Sigmoid colon (tissue), 7 donors: ENCODE measurements at regions of chr19 and their contacts with region 1.

Region 1: DNA sequence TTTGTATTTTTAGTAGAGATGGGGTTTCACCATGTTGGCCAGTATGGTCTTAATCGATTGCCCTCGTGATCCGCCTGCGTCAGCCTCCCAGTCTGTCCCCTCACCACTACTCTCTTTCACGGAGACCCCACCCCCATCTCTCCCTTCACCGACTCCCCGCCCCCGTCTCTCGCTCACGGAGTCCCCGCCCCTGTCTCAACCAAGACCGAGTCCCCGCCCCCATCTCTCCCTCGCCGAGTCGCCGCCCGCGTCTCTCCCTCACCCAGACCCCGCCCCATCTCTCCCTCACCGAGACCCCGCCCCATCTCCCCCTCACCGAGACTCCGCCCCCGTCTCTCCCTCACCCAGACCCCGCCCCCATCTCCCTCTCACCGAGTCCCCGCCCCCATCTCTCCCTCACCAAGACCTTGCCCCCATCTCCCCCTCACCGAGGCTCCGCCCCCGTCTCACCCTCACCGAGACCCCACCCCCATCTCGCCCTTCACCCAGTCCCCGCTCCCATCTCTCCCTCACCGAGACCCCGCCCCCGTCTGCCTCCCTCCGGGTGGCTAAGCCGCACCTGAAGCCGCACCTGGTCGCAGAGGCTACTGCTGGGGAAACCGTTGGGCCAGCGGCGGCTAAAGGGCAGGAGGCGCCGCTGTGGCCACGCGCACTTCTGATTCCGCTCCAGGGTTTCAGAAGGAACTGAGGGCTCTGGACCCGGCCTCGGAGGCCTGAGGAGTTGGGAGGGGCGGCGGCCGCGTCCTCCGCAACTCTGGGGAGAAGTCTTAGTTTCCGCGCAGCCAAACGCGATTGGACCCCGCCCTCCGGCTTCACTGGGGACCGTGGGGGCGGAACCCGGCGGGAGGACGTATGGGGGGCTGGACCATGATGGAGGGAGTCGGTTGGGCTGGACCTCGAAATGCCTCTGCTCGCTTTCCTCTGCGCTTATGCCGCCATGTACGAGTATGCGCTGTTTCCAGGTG is 17.1 kb upstream of the ZNF846 start:
- DNase-seq: peak; percentile 99
- H3K4me3 ChIP-seq: peak overlapping the region; percentile 64 to 92 (median 72)
- H3K27ac ChIP-seq: peak overlapping the region; percentile 94 to 99 (median 99)
- H3K4me1 ChIP-seq: peaks cover 0 to 32% (median 27%) of the 10 kb centered on the region in 4 donors
- H3K27me3 ChIP-seq: no peaks in the 10 kb centered on the region
- CTCF ChIP-seq: no peak
- EP300 ChIP-seq: no peak
- POLR2A ChIP-seq: peak; percentile 88 to 92

Region 2: DNA sequence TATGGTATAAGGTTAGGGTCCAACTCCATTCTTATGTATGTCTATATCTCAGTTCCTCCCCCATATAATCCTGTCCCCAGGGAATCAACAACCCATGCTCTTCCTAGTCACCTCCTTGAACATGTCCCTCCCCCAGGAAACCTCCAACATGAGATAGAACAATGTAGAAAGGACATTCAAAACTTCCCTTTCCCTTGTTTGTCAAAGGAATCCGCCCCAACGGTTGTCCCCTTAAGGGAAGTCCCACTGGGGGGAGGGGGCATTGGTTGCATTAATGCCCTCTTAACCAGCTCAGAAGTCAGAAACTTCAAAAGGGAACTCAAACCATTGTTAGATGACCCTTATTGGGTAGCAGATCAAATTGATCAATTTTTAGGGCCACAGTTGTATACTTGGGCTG is 157.8 kb before region 1 on chr19:
- intact Hi-C with region 1: loop called (anchors 1 kb)
- DNase-seq: no peak
- H3K4me3 ChIP-seq: no peak overlapping the region
- H3K27ac ChIP-seq: no peak overlapping the region
- H3K4me1 ChIP-seq: peaks cover 0 to 24% (median 9%) of the 10 kb centered on the region in 4 donors
- H3K27me3 ChIP-seq: no peaks in the 10 kb centered on the region
- CTCF ChIP-seq: no peak
- EP300 ChIP-seq: no peak
- POLR2A ChIP-seq: no peak

Region 3: GRCh38 chr19:10000171-10000826 is 214.7 kb after region 1 on chr19:
- intact Hi-C with region 1: no loop called
- DNase-seq: peak; percentile 84
- H3K4me3 ChIP-seq: no peak overlapping the region
- H3K27ac ChIP-seq: no peak overlapping the region
- H3K4me1 ChIP-seq: no peaks in the 10 kb centered on the region
- H3K27me3 ChIP-seq: peaks cover 0 to 13% (median 0%) of the 10 kb centered on the region in 3 donors
- CTCF ChIP-seq: peak; percentile 29 to 48 (median 39)
- EP300 ChIP-seq: no peak
- POLR2A ChIP-seq: no peak